Mucosa of descending colon (tissue), 3 donors: ENCODE measurements at regions of chr6 and their contacts with region 1.

Region 1: GRCh38 chr6:10429638-10430427 is 15.0 kb upstream of the TFAP2A start:
- DNase-seq: peak in 1 of 3 donors; percentile 59
- ATAC-seq: peak; percentile 74
- H3K4me3 ChIP-seq: no peak overlapping the region
- H3K4me1 ChIP-seq: peaks cover 14% of the 10 kb centered on the region
- CTCF ChIP-seq: no peak

Region 2: GRCh38 chr6:10030942-10031537 is 398.8 kb before region 1 on chr6:
- intact Hi-C with region 1: loop called in 1 of 2 experiments (anchors 10 kb)
- DNase-seq: no peak
- ATAC-seq: no peak
- H3K4me3 ChIP-seq: no peak overlapping the region
- H3K4me1 ChIP-seq: no peaks in the 10 kb centered on the region
- CTCF ChIP-seq: no peak

Region 3: GRCh38 chr6:10098756-10099528 is 330.9 kb before region 1 on chr6:
- intact Hi-C with region 1: no loop called
- DNase-seq: peak in 2 of 3 donors; percentile 2 to 33
- ATAC-seq: peak; percentile 62
- H3K4me3 ChIP-seq: no peak overlapping the region
- H3K4me1 ChIP-seq: no peaks in the 10 kb centered on the region
- CTCF ChIP-seq: no peak